ENCODE measurements at regions of chr2 and their contacts with region 1.

Region 1: GRCh38 chr2:237998530-237998929 is 31.7 kb downstream of the UBE2F start:
- DNase-seq: peak; percentile 33
- H3K4me3 Mint-ChIP-seq: peak overlapping the region; percentile 68
- H3K27ac Mint-ChIP-seq: peak overlapping the region; percentile 97
- H3K4me1 Mint-ChIP-seq: peaks cover 54% of the 10 kb centered on the region
- H3K27me3 Mint-ChIP-seq: no peaks in the 10 kb centered on the region

Region 2: DNA sequence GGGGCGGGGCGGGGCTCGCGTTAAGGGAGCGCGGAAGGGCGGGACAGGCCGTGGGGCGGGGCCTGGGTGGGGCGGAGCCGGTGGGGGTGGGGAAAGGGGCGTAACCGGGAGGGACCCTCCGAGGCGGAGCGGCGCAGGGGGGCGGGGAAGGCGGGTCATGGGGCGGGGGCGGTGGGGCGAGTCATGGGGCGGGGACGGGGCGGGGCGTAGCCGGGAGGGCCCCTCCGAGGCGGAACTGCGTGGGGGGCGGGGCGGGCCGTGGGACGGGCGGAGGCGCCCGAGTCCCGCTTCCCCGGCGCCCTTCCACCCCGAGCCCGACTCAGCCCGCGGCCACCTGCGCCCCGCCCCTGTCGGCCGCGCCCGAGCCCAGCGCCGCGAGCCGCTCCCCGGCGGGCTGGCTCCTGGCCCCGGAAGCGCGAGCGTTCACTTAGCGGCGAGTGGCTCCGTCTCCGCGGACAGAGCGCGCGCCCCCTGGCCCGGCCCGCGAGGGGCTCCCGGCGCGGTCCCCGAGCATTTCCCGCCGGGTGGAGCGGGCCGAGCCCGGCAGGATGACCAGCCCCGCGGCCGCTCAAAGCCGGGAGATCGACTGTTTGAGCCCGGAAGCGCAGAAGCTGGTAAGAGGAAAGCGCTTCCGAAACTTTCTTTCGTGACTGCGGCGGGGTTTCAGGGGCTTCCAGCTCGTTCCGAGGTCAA is 306.5 kb before region 1 on chr2:
- intact Hi-C with region 1: loop called (anchors 2 kb)
- DNase-seq: peak; percentile 91
- H3K4me3 Mint-ChIP-seq: peak overlapping the region; percentile 99
- H3K27ac Mint-ChIP-seq: peak overlapping the region; percentile 98
- H3K4me1 Mint-ChIP-seq: peaks cover 67% of the 10 kb centered on the region
- H3K27me3 Mint-ChIP-seq: no peaks in the 10 kb centered on the region

Region 3: DNA sequence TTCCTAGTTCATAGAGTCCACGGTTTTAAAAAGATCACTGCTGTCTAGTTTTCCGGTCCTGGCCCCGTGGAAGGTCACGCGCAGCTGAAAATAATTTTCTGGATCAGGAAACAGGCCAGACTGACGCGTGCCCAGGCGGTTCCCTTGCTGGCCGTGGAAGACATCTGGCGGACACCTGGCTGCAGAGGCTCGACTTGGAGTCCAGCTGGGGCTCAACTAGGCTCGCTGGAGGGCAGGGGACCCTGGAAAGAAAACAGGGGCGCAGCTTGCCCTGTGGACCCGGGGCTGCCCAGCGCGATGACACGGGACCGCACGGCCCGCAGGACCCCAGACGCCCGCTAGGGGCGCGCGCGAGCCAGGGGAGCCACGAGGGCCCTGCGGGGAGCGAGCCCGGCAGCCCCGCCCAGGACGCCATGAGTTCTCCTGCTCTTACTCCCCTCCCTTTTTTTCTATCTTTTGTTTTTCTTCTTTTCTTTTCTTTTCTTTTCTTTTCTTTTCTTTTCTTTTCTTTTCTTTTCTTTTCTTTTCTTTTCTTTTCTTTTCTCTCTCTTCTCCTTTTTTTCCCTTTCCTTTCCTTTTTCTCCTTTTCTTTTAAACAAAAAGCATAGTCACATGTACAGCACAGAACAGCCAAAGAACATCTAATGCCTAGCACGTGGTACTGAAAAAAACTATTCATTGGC is 74.9 kb before region 1 on chr2:
- intact Hi-C with region 1: loop called (anchors 1 kb)
- DNase-seq: peak; percentile 74
- H3K4me3 Mint-ChIP-seq: peak overlapping the region; percentile 70
- H3K27ac Mint-ChIP-seq: peak overlapping the region; percentile 74
- H3K4me1 Mint-ChIP-seq: peaks cover 38% of the 10 kb centered on the region
- H3K27me3 Mint-ChIP-seq: peaks cover 4% of the 10 kb centered on the region

Region 4: DNA sequence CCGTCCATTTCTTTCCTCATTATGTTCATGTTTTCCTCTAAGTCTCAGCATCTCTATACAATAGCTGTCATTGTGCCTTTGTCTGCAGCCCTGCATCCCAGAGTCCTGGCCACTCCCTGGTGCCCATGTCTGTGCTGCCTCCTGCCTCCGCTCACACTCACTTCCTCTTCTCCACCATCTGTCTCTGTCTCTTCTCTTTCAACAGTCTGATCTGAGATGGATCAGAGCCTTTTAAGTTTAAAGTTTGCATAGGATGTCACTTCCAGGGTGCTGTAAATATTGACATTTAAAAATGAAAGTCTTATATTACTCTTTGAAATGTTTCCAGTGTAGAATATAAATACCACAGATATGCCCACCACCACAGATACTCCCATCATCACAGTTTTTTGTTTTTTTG is 11.0 kb after region 1 on chr2:
- intact Hi-C with region 1: loop called (anchors 1 kb)
- DNase-seq: no peak
- H3K4me3 Mint-ChIP-seq: peak overlapping the region; percentile 60
- H3K27ac Mint-ChIP-seq: peak overlapping the region; percentile 97
- H3K4me1 Mint-ChIP-seq: peaks cover 58% of the 10 kb centered on the region
- H3K27me3 Mint-ChIP-seq: no peaks in the 10 kb centered on the region

Region 5: DNA sequence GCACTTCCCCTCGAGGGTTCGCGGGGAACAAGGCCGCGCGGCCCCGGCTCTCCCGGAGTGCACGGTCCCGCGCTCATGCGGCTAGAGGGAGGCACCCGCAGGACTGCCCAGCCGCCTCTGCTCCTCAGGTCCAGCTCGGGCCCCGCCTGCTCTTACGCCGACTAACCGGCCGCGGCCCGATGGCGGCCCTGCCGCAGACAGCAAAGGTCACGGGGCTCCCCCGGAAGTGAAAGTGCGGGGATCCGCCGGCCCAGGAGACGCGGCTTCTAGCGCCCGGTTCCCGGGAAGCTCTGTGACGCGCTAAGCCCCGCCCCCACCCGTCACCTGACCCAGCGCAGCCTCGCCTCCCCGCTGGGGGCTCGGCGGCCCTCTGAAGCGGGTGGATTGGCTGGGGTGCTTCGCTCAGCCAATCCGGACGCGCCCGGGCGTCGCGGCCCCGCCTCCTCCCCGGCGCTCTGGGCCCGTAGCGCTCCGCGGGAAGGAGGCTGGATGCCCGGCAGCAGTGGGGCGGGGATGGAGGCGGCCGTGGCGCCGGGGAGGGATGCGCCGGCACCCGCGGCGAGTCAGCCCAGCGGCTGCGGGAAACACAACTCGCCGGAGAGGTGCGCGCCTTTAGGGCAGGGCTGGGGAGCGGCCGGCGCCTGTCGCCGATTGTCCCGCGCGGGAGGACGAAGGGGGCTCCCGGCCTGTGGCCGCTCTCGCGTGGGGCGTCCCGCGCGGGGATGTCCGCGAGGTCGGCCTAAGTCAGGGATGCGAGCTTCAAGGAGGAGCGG is 62.2 kb after region 1 on chr2 and contains the start of gene SCLY:
- intact Hi-C with region 1: loop called (anchors 1 kb)
- DNase-seq: peak; percentile 93
- H3K4me3 Mint-ChIP-seq: peak within 1 kb of the TSS; percentile 90
- H3K27ac Mint-ChIP-seq: peak within 1 kb of the TSS; percentile 91
- H3K4me1 Mint-ChIP-seq: peaks cover 62% of the 10 kb centered on the region
- H3K27me3 Mint-ChIP-seq: peaks cover 7% of the 10 kb centered on the region
- total RNA-seq, gene SCLY: 109 and 119 TPM in 2 replicates